ENCODE measurements at regions of chr16 and their contacts with region 1.

Region 1: DNA sequence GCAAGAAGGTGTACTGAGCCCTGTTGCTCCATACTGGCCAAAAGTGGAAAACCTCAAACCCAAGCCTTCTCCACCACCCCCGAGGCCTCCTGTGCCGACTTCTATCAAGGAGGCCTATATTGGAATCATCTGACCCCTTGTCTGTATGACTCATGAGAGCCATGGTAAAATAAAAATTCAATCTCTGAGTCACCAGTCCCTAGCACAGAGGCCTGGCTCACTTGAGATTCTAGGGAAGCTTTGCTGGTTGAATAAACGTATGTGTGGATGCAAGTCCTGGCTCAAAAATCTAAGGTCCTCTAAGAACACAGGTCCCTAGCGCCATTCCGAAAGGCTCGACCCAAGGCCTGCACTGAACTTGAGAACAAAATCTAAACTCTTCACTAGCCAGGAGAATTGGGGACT is 15.0 kb downstream of the NSMCE1 start:
- DNase-seq: no peak
- H3K4me3 Mint-ChIP-seq: peak overlapping the region; percentile 74
- H3K27ac Mint-ChIP-seq: peak overlapping the region; percentile 96
- H3K4me1 Mint-ChIP-seq: peaks cover 83% of the 10 kb centered on the region
- H3K27me3 Mint-ChIP-seq: no peaks in the 10 kb centered on the region

Region 2: GRCh38 chr16:27268376-27269299 is 15.1 kb after region 1 on chr16 and contains the start of gene NSMCE1:
- intact Hi-C with region 1: loop called (anchors 1 kb)
- DNase-seq: peak; percentile 99
- H3K4me3 Mint-ChIP-seq: peak within 1 kb of the TSS; percentile 98
- H3K27ac Mint-ChIP-seq: peak within 1 kb of the TSS; percentile 98
- H3K4me1 Mint-ChIP-seq: peaks cover 70% of the 10 kb centered on the region
- H3K27me3 Mint-ChIP-seq: no peaks in the 10 kb centered on the region
- total RNA-seq, gene NSMCE1: 143 and 149 TPM in 2 replicates

Region 3: DNA sequence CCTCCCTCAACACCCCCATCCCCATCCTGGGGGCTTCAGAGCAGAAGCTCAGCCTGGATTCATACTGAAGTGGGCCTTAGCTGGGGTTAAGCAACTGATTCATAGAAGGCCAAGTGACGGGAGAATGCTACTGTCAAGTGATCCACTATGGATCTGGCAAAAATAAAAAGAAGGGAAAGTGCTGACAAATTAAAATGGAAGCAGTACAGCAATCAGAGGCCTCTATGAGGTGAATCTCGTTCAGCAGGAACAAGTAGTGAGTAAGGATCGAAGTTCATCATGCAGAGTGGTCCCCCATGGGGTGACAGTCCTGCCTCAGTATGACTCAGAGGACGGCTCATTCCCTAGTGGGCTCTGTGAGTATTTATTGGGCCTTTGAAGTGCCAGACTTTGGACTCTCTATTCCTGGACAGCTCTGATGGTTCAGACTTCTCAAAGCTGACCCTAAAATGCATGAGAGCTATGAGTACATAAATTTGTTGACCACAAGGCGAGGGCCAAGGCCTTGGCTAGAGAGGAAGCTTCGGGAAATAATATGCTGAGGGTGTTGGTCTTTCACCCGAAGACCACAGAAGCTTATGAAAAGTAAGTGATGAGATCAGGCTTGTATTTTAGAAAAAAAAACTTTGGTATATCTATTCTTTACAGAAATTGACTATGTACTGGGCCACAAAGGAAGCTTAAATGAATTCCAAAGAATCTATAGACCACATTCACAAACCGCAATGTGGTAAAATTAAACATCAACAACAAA is 20.3 kb after region 1 on chr16:
- intact Hi-C with region 1: loop called (anchors 1 kb)
- DNase-seq: peak; percentile 83
- H3K4me3 Mint-ChIP-seq: peak overlapping the region; percentile 68
- H3K27ac Mint-ChIP-seq: peak overlapping the region; percentile 94
- H3K4me1 Mint-ChIP-seq: peaks cover 59% of the 10 kb centered on the region
- H3K27me3 Mint-ChIP-seq: no peaks in the 10 kb centered on the region

Region 4: GRCh38 chr16:27286451-27286850 is 32.9 kb after region 1 on chr16:
- intact Hi-C with region 1: loop called (anchors 1 kb)
- DNase-seq: no peak
- H3K4me3 Mint-ChIP-seq: no peak overlapping the region
- H3K27ac Mint-ChIP-seq: peak overlapping the region; percentile 84
- H3K4me1 Mint-ChIP-seq: peaks cover 77% of the 10 kb centered on the region
- H3K27me3 Mint-ChIP-seq: no peaks in the 10 kb centered on the region

Region 5: DNA sequence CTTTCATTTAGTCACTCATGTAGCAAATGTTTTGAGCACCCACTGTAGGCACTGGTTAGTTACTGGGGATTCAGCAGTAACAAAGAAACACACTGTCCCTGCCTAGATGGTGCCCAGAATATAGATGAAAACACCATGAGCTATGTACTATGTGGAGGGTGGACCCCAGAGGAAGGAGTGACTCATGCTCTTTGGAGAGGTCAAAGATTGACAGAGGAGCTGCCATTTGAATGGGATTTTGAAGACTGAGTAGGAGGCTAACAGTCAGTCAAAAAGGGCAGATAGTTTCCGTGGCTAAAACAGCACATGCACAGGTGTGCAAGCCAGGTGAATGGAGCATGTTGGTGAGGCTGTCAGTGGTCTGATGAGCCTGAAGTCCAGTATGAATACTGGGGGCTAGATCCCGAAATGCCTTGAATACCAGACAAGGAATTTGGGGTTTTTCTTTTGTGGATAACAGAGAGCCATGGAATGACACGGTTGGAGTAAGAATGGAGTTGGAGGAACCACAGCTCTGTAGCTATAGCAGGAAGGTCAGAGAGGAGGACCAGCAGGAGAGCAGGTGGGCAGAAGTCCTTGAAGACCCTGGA is 154.6 kb after region 1 on chr16:
- intact Hi-C with region 1: loop called (anchors 1 kb)
- DNase-seq: peak; percentile 79
- H3K4me3 Mint-ChIP-seq: peak overlapping the region; percentile 100
- H3K27ac Mint-ChIP-seq: peak overlapping the region; percentile 98
- H3K4me1 Mint-ChIP-seq: peaks cover 62% of the 10 kb centered on the region
- H3K27me3 Mint-ChIP-seq: no peaks in the 10 kb centered on the region

Measured in activated CD4-positive, alpha-beta T cell treated with anti-CD3 and anti-CD28 coated beads, Interleukin-2, amount 10 ng/mL, durations not matched to agents 24 days and 14 days (primary cell).